ENCODE measurements at regions of chr5 and their contacts with region 1.

Region 1: DNA sequence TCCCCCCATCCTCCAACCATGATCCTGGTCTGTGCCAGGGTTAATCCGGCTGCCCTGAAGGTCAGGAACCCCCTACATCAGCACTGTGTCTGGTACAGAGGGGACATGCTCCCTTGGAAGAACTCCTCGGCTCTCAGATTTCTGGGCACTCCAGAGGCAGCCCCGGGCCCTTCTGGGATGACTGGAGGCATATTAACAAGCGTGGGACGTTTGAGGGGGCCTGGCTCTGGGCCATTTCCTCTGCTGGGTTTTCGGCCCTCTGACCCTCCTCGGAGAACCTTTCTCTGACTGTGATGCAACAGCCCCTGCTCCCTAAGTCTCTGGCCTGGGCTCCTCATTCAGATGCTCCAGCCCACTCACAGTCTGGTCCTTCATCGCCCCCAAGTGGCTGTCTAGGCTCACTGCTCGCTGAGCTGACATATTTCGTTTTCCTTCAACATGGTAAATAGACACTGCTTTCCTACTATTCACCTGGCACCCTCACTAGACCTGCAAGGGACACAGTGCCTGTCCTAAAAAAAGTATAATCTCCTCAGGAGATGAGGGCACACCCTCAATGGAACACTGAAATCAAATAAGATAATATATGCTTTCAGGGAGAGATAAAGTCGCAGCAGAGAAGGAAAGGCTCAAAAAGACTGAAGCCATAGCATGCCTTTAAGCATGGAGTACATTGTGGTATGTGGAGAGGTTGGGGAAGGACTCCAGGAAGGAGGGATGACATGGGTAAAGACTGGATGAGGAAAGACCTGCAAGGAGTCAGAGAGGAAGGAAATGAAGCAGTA is 404.7 kb upstream of the TRPC7 start:
- DNase-seq: peak; percentile 74 to 80 (median 74)
- ATAC-seq: peak; percentile 98
- H3K4me3 ChIP-seq: no peak overlapping the region
- H3K27ac ChIP-seq: no peak overlapping the region
- H3K4me1 ChIP-seq: no peaks in the 10 kb centered on the region
- H3K27me3 ChIP-seq: no peaks in the 10 kb centered on the region; a peak in 1 of 5 replicates
- CTCF ChIP-seq: peak; percentile 80 to 94 (median 87)
- EP300 ChIP-seq: no peak
- POLR2A ChIP-seq: no peak
- RAD21 ChIP-seq: peak; percentile 95 to 96

Region 2: GRCh38 chr5:136249678-136250266 is 520.3 kb before region 1 on chr5:
- CTCF ChIA-PET with region 1: interaction called, 17 read pairs
- POLR2A ChIA-PET with region 1: interaction called, 3 read pairs
- in situ Hi-C with region 1: loop called (anchors 10 kb)
- intact Hi-C with region 1: loop called (anchors 1 kb)
- DNase-seq: peak; percentile 41 to 67 (median 46)
- ATAC-seq: peak; percentile 95
- H3K4me3 ChIP-seq: no peak overlapping the region
- H3K27ac ChIP-seq: no peak overlapping the region
- H3K4me1 ChIP-seq: no peaks in the 10 kb centered on the region; a peak in 2 of 5 replicates
- H3K27me3 ChIP-seq: peaks cover 0 to 6% of the 10 kb centered on the region in 2 experiments; a peak in 3 of 5 replicates
- CTCF ChIP-seq: peak; percentile 75 to 89 (median 87)
- EP300 ChIP-seq: no peak
- POLR2A ChIP-seq: no peak
- RAD21 ChIP-seq: peak; percentile 90

Region 3: GRCh38 chr5:136364307-136364706 is 405.8 kb before region 1 on chr5:
- CTCF ChIA-PET with region 1: interaction called, 11 read pairs
- POLR2A ChIA-PET with region 1: no interaction called
- in situ Hi-C with region 1: loop called (anchors 5 kb)
- intact Hi-C with region 1: loop called (anchors 1 kb)
- DNase-seq: peak; percentile 9 to 32 (median 20)
- ATAC-seq: no peak
- H3K4me3 ChIP-seq: no peak overlapping the region
- H3K27ac ChIP-seq: no peak overlapping the region
- H3K4me1 ChIP-seq: no peaks in the 10 kb centered on the region
- H3K27me3 ChIP-seq: no peaks in the 10 kb centered on the region
- CTCF ChIP-seq: peak in 2 of 3 experiments; percentile 46 to 54; a peak in 3 of 6 replicates
- EP300 ChIP-seq: no peak
- POLR2A ChIP-seq: no peak
- RAD21 ChIP-seq: peak; percentile 43 to 63

Region 4: DNA sequence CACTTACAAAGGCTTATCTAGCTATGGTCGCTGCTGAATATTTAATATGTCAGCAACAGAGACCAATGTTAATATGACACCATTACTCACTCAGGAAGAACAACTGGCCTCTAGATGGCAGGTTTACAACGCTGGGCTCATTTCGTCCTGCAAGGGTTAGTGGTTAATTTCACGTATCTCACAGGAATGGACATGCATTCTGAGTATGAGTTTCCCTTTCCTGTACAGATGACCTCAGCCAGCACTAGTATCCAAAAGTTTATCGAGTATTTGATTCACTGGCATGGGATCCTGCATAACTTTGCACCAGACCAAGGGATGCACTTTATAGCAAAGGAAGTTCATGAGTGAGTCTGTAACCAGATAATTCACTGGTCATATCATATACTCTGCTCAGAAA is 396.1 kb before region 1 on chr5:
- CTCF ChIA-PET with region 1: interaction called, 10 read pairs
- POLR2A ChIA-PET with region 1: interaction called, 3 read pairs
- in situ Hi-C with region 1: loop called (anchors 5 kb)
- intact Hi-C with region 1: loop called (anchors 1 kb)
- DNase-seq: peak in 2 of 4 experiments; percentile 6 to 28
- ATAC-seq: peak; percentile 80
- H3K4me3 ChIP-seq: no peak overlapping the region
- H3K27ac ChIP-seq: no peak overlapping the region
- H3K4me1 ChIP-seq: no peaks in the 10 kb centered on the region
- H3K27me3 ChIP-seq: no peaks in the 10 kb centered on the region
- CTCF ChIP-seq: peak; percentile 46 to 75 (median 55); a peak in 5 of 6 replicates
- EP300 ChIP-seq: no peak
- POLR2A ChIP-seq: no peak
- RAD21 ChIP-seq: peak; percentile 62 to 67

Region 5: GRCh38 chr5:136424835-136425584 is 345.1 kb before region 1 on chr5:
- CTCF ChIA-PET with region 1: no interaction called
- POLR2A ChIA-PET with region 1: interaction called, 3 read pairs
- in situ Hi-C with region 1: no loop called
- intact Hi-C with region 1: loop called (anchors 5 kb)
- DNase-seq: peak; percentile 75 to 82 (median 80)
- ATAC-seq: peak; percentile 99
- H3K4me3 ChIP-seq: no peak overlapping the region
- H3K27ac ChIP-seq: no peak overlapping the region
- H3K4me1 ChIP-seq: no peaks in the 10 kb centered on the region
- H3K27me3 ChIP-seq: peaks cover 4 to 6% of the 10 kb centered on the region in 2 experiments; a peak in 4 of 5 replicates
- CTCF ChIP-seq: peak; percentile 79 to 87 (median 81)
- EP300 ChIP-seq: no peak
- POLR2A ChIP-seq: no peak
- RAD21 ChIP-seq: peak; percentile 48 to 76

Region 6: GRCh38 chr5:136629125-136629792 is 140.8 kb before region 1 on chr5:
- CTCF ChIA-PET with region 1: no interaction called
- POLR2A ChIA-PET with region 1: no interaction called
- in situ Hi-C with region 1: no loop called
- intact Hi-C with region 1: no loop called
- DNase-seq: no peak
- ATAC-seq: no peak
- H3K4me3 ChIP-seq: no peak overlapping the region
- H3K27ac ChIP-seq: no peak overlapping the region
- H3K4me1 ChIP-seq: peaks cover 3 to 15% of the 10 kb centered on the region in 2 experiments; a peak in 4 of 5 replicates
- H3K27me3 ChIP-seq: peaks cover 0 to 6% of the 10 kb centered on the region in 2 experiments; a peak in 1 of 5 replicates
- CTCF ChIP-seq: no peak
- EP300 ChIP-seq: no peak
- POLR2A ChIP-seq: no peak
- RAD21 ChIP-seq: no peak

Region 7: DNA sequence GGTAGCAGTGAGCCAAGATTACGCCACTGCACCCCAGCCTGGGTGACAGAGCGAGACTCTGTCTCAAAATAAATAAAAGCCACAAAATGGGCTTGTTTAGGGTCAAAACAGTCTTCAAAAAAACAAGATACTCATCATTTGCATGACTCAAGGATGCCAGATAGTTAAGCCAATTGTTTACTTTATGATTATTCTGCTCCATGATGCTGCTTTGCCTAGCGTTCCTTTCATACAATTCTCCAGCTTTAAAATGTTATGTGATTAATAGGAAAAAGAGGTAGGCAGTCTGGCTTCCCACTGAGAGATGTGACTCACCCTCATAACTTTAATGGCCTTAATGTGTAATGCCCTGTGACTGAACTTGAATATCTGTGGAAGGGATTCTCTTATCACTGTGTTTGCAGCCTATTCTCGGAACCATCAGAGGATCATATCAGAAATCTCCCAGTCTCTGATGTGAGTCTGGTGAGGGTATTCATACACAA is 40.1 kb before region 1 on chr5:
- CTCF ChIA-PET with region 1: no interaction called
- POLR2A ChIA-PET with region 1: no interaction called
- in situ Hi-C with region 1: no loop called
- intact Hi-C with region 1: no loop called
- DNase-seq: peak in 2 of 4 experiments; percentile 10 to 32
- ATAC-seq: no peak
- H3K4me3 ChIP-seq: no peak overlapping the region
- H3K27ac ChIP-seq: no peak overlapping the region
- H3K4me1 ChIP-seq: peaks cover 0 to 4% of the 10 kb centered on the region in 2 experiments; a peak in 1 of 5 replicates
- H3K27me3 ChIP-seq: no peaks in the 10 kb centered on the region
- CTCF ChIP-seq: no peak
- EP300 ChIP-seq: peak; percentile 46
- POLR2A ChIP-seq: no peak
- RAD21 ChIP-seq: no peak